ENCODE measurements at regions of chr1 and their contacts with region 1.

Region 1: GRCh38 chr1:39159224-39160036 is 45.1 kb upstream of the MACF1 start:
- DNase-seq: no peak
- ATAC-seq: peak; percentile 5 to 66 (median 20)
- H3K4me3 ChIP-seq: peak overlapping the region; percentile 21 to 57 (median 52)
- H3K27ac ChIP-seq: peak overlapping the region; percentile 72 to 95 (median 90)
- H3K4me1 ChIP-seq: peaks cover 0 to 73% (median 25%) of the 10 kb centered on the region in 4 donors
- H3K27me3 ChIP-seq: no peaks in the 10 kb centered on the region
- CTCF ChIP-seq: no peak
- POLR2A ChIP-seq: no peak

Region 2: DNA sequence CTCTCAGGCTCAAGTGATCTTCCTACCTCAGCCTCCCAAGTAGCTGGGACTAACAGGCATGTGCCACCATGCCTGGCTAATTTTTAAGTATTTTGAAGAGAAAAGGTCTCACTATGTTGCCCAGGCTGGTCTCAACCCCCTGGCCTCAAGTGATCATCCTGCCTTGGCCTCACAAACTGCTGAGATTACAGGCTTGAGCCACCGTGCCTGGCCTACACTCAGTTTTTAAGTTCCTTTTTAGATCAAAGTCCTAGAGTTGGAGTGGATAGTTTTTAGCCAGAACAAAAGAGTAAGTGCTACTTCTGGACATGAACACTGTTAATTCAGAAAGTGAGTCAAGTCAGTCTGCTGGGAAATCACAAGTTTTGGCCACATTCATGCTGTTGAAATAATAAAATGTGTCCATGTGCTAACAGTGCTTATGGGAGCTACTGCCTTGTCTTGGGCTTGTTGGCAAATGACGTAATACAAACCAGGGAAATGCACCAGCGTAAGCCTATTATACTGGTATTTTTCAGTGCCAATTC is 49.0 kb before region 1 on chr1:
- intact Hi-C with region 1: loop called in 1 of 2 experiments (anchors 10 kb)
- DNase-seq: no peak
- ATAC-seq: peak in 3 of 4 donors; percentile 12 to 34 (median 17)
- H3K4me3 ChIP-seq: no peak overlapping the region
- H3K27ac ChIP-seq: peak overlapping the region; percentile 23 to 62 (median 59)
- H3K4me1 ChIP-seq: peaks cover 5 to 60% (median 16%) of the 10 kb centered on the region in 4 donors
- H3K27me3 ChIP-seq: no peaks in the 10 kb centered on the region
- CTCF ChIP-seq: no peak
- POLR2A ChIP-seq: no peak